ENCODE measurements at regions of chr3 and their contacts with region 1.

Region 1: DNA sequence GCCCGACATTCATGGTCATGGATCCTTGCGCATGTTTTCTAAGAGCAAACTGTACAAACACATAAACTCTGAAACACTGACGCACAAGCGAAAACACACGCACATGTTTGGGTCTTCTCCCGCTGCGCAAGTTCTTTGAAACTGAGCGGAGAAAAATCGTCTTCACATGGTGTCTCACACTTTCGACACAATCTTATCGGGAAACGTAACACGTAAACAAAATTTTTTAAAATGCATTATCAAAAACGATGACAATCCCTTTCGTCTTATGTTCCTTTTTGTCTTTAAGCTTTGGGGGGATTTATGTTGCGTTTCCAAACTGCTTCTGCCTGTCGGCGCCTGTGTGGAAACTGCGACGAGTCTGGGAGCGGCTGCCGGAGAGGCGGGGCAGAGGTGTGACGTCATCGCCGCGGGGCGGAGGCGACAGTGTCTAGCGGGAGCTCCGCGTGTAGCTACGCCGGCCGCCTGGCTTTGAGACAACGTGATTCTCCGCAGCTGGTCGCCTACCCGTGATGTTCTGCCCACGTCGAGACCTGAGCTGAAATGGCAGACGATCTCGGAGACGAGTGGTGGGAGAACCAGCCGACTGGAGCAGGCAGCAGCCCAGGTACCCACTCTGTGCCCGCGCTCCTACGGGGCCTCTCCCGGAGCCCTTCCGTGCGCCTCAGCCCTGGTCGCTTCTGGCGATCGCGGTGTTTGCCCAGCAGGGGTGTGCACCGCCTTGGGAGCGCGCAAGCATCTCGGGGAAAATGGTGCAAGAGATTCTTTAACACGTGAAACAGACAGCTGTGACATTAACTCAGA is at the start of gene CMSS1:
- DNase-seq: peak; percentile 97
- ATAC-seq: peak; percentile 94
- H3K4me3 Mint-ChIP-seq: peak within 1 kb of the TSS; percentile 94
- H3K27ac Mint-ChIP-seq: peak within 1 kb of the TSS; percentile 96
- H3K4me1 Mint-ChIP-seq: peaks cover 39% of the 10 kb centered on the region
- H3K27me3 Mint-ChIP-seq: no peaks in the 10 kb centered on the region
- CTCF ChIP-seq: no peak
- total RNA-seq, gene CMSS1: 93.9 to 110 TPM

Region 2: DNA sequence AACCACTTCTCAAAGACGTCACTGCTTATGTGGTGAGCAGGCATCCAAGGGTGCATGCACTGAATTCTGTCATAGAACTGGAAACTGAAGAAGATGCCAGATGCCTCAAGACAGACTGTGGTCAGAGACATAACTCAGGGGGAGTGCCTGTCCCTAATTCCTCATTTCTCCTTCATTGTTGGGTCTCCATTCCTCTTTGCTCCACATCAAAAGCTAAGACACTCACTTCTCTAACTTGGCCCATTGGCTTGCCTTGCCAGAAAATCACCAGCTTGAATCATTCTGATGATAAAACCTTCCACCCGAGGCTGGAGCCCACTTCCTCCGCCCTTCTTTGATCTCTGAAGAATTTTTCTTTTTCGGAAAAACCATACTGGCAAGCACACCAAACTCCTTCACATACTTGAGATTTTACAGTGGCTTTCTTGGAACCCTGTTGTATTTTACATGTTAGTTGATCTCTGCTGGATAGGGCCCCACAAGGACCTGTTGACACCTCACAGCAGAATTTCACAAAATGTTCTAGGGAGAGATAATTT is 109.4 kb before region 1 on chr3:
- CTCF ChIA-PET with region 1: no interaction called
- POLR2A ChIA-PET with region 1: no interaction called
- intact Hi-C with region 1: no loop called
- DNase-seq: no peak
- ATAC-seq: no peak
- H3K4me3 Mint-ChIP-seq: no peak overlapping the region
- H3K27ac Mint-ChIP-seq: no peak overlapping the region
- H3K4me1 Mint-ChIP-seq: no peaks in the 10 kb centered on the region
- H3K27me3 Mint-ChIP-seq: no peaks in the 10 kb centered on the region
- CTCF ChIP-seq: no peak

Region 3: DNA sequence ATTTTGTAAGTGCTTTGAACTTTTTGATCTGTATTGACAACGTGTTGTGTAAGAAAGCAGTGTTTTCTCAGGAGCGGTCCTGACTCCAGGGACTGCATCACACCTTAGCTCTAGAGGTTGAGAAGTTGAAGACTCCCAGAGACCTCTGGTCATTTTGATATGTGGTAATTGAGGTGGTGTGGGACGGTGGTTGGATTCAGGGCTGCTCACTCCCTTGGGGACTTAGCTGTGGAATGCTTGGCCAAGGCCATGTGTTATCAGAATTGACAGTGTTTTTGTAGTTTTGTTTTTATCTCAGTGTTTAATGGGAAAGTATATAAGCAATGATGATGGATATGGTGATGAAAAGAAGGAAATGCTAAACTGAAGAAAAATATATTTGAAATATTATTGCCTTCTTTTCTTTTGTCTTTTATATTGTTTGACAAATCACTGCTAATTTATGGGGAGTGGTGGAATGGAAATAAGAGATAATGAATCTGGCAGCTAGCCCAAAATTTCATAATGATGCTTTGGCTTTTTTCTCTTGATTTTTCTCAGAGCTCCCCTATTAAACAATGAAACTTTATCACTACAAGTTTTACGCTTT is 16.1 kb after region 1 on chr3:
- CTCF ChIA-PET with region 1: interaction called, 27 read pairs
- POLR2A ChIA-PET with region 1: interaction called, 6 read pairs
- intact Hi-C with region 1: no loop called
- DNase-seq: no peak
- ATAC-seq: no peak
- H3K4me3 Mint-ChIP-seq: no peak overlapping the region
- H3K27ac Mint-ChIP-seq: no peak overlapping the region
- H3K4me1 Mint-ChIP-seq: peaks cover 15% of the 10 kb centered on the region
- H3K27me3 Mint-ChIP-seq: no peaks in the 10 kb centered on the region
- CTCF ChIP-seq: no peak

Measured in activated CD8-positive, alpha-beta T cell treated with anti-CD3 and anti-CD28 coated beads for 36 hours (primary cell).